ENCODE measurements at regions of chr1 and their contacts with region 1.

Region 1: GRCh38 chr1:38624336-38625039 is 235.1 kb downstream of the RRAGC start:
- DNase-seq: no peak
- H3K4me3 Mint-ChIP-seq: no peak overlapping the region
- H3K27ac Mint-ChIP-seq: no peak overlapping the region
- H3K4me1 Mint-ChIP-seq: no peaks in the 10 kb centered on the region
- H3K27me3 Mint-ChIP-seq: peaks cover 61% of the 10 kb centered on the region
- CTCF ChIP-seq: no peak

Region 2: GRCh38 chr1:38551318-38552307 is 72.9 kb before region 1 on chr1:
- CTCF ChIA-PET with region 1: no interaction called
- intact Hi-C with region 1: loop called (anchors 2 kb)
- DNase-seq: no peak
- H3K4me3 Mint-ChIP-seq: no peak overlapping the region
- H3K27ac Mint-ChIP-seq: no peak overlapping the region
- H3K4me1 Mint-ChIP-seq: no peaks in the 10 kb centered on the region
- H3K27me3 Mint-ChIP-seq: peaks cover 100% of the 10 kb centered on the region
- CTCF ChIP-seq: no peak